Activated naive CD4-positive, alpha-beta T cell treated with anti-CD3 and anti-CD28 coated beads for 36 hours (primary cell): ENCODE measurements at regions of chr6 and their contacts with region 1.

Region 1: GRCh38 chr6:139028658-139029469 is at the start of gene ABRACL:
- DNase-seq: peak; percentile 92
- H3K4me3 Mint-ChIP-seq: no peak within 1 kb of the TSS
- H3K27ac Mint-ChIP-seq: peak within 1 kb of the TSS; percentile 95
- H3K4me1 Mint-ChIP-seq: peaks cover 18% of the 10 kb centered on the region
- H3K27me3 Mint-ChIP-seq: no peaks in the 10 kb centered on the region
- total RNA-seq, gene ABRACL: 185 to 190 TPM

Region 2: DNA sequence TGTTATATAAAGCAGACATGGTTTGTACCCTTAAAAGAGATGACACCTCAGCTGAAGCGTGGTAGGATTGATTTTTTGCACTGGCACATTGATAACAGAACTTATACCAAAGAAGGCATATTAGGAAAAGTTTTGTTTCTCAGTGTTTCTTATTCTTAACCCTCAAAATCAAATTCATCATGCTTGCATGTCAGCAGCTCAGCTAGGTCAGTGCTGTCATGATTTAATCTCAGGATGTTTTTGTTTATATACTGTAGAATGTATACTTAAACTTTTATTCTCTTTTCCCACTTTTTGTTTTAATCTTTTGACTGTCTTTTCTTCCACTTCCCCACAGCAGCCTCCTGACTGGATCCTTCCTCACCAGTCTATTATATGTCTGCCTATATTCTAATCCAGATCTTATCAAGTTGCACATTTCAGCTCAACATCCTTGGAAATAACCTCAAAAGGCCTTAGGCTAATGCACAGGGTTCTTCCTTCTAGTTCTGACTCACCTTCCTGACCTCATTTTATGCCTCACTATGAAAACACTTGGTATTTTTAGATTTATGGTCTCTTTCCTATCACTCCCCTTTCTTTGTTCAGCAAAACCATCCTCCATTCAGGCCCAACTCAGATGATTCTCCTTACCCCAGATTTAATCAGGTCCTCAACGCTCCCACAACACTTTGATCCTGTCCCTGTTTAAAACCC is 617.7 kb before region 1 on chr6:
- CTCF ChIA-PET with region 1: no interaction called
- intact Hi-C with region 1: loop called (anchors 5 kb)
- DNase-seq: peak; percentile 31
- H3K4me3 Mint-ChIP-seq: peak overlapping the region; percentile 1
- H3K27ac Mint-ChIP-seq: peak overlapping the region; percentile 84
- H3K4me1 Mint-ChIP-seq: peaks cover 32% of the 10 kb centered on the region
- H3K27me3 Mint-ChIP-seq: no peaks in the 10 kb centered on the region

Region 3: GRCh38 chr6:138773177-138774091 is 255.4 kb before region 1 on chr6 and contains the start of gene CCDC28A:
- CTCF ChIA-PET with region 1: no interaction called
- intact Hi-C with region 1: loop called (anchors 1 kb)
- DNase-seq: peak; percentile 97
- H3K4me3 Mint-ChIP-seq: peak within 1 kb of the TSS; percentile 98
- H3K27ac Mint-ChIP-seq: peak within 1 kb of the TSS; percentile 100
- H3K4me1 Mint-ChIP-seq: peaks cover 30% of the 10 kb centered on the region
- H3K27me3 Mint-ChIP-seq: no peaks in the 10 kb centered on the region
- total RNA-seq, gene CCDC28A: 18.9 to 19.2 TPM

Region 4: DNA sequence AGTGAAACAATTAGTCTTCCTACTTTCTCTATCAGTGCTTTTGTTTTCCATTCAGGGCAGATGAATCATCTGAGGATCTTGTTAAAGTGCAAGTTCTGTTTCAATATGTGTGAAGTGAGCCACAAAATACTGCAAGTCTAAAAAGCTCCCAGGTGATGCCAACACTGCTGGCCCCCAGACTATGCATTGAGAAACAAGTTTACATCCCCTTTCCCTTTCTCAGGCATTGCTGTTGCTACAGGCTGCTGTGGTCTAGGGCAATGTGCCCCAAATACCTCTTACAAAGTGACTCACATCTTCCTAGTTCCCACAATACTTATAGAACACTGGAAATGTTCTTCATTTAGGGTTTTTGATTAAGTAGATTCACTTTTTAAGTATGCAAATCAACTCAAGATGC is 31.5 kb after region 1 on chr6:
- CTCF ChIA-PET with region 1: no interaction called
- intact Hi-C with region 1: loop called (anchors 2 kb)
- DNase-seq: peak; percentile 50
- H3K4me3 Mint-ChIP-seq: no peak overlapping the region
- H3K27ac Mint-ChIP-seq: no peak overlapping the region
- H3K4me1 Mint-ChIP-seq: peaks cover 17% of the 10 kb centered on the region
- H3K27me3 Mint-ChIP-seq: no peaks in the 10 kb centered on the region

Region 5: GRCh38 chr6:139117734-139118133 is 88.9 kb after region 1 on chr6:
- CTCF ChIA-PET with region 1: interaction called, 3 read pairs
- intact Hi-C with region 1: loop called (anchors 1 kb)
- DNase-seq: no peak
- H3K4me3 Mint-ChIP-seq: no peak overlapping the region
- H3K27ac Mint-ChIP-seq: peak overlapping the region; percentile 25
- H3K4me1 Mint-ChIP-seq: peaks cover 48% of the 10 kb centered on the region
- H3K27me3 Mint-ChIP-seq: no peaks in the 10 kb centered on the region

Region 6: DNA sequence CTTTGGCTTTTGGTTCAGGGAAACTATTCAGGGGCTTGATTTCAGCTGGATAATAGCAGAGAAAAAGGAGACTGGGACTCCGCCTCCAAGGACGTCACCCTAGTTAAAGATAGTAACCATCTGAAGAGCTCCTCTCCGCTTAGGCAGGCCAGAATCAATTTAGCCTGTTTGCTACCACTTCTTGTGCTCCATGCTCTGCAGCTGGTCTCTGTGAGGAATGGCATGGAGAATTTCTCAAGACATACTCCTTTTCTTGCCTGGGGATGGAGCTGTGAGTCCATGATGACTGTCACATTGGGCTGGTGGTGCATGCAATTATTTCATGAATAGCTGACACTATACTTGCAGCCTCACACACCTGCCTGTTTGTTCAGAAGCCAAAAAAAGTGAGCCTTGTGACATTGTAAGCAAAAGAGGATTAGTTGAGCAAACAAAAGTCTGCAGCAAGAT is 201.6 kb after region 1 on chr6:
- CTCF ChIA-PET with region 1: no interaction called
- intact Hi-C with region 1: no loop called
- DNase-seq: peak; percentile 46
- H3K4me3 Mint-ChIP-seq: no peak overlapping the region
- H3K27ac Mint-ChIP-seq: no peak overlapping the region
- H3K4me1 Mint-ChIP-seq: peaks cover 5% of the 10 kb centered on the region
- H3K27me3 Mint-ChIP-seq: no peaks in the 10 kb centered on the region

Region 7: GRCh38 chr6:139608466-139609261 is 579.8 kb after region 1 on chr6:
- CTCF ChIA-PET with region 1: no interaction called
- intact Hi-C with region 1: no loop called
- DNase-seq: no peak
- H3K4me3 Mint-ChIP-seq: no peak overlapping the region
- H3K27ac Mint-ChIP-seq: no peak overlapping the region
- H3K4me1 Mint-ChIP-seq: no peaks in the 10 kb centered on the region
- H3K27me3 Mint-ChIP-seq: peaks cover 3% of the 10 kb centered on the region